ENCODE measurements at regions of chr6 and their contacts with region 1.

Region 1: DNA sequence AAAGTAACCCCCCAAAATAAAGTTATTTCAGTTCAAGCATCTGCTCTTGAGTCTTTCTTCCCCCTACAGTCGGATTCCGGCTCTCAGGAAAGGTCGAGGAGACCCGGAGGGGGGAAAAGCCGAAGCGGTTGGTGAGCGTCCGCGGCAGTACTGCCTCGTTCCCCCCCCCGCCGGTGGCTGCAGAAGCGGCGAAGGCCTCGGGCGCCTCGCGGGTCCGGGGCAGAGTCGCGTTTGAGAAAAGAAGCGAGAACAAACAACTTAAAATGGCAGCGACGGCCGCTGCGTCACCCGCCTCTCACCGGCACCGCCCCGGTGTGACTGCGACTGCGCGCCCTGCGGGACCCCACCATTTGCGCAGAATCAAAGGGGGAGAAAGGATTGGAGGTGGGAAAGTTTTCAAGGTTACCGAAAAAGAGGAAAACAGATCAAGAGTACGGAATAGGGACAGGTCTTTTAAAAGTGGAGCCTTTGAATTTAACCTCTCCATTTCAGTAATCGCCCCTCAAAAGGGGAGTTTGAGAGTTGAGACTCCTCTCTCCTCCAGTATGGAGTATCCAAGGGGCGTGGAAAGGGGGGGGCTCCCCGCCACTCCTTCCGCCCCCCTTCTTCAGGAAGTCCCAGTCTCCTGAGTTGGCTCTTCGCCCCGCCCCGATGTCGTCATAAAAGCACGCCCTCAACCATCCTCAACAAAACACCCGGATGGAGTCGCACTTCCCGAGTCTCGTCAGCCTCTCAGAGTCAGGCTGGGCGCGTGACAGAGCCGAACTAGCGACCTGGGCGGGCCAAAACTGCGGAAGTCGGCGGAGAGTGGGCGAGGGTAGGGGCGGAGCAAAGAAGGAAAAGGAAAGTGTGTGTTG is 1.9 kb upstream of the C6orf62 start:
- DNase-seq: peak; percentile 100
- H3K4me3 ChIP-seq: peak overlapping the region; percentile 81 to 89 (median 86)
- H3K27ac ChIP-seq: peak overlapping the region; percentile 97
- H3K4me1 ChIP-seq: peaks cover 34% of the 10 kb centered on the region
- H3K27me3 ChIP-seq: no peaks in the 10 kb centered on the region
- CTCF ChIP-seq: no peak
- POLR2A ChIP-seq: peak; percentile 98

Region 2: DNA sequence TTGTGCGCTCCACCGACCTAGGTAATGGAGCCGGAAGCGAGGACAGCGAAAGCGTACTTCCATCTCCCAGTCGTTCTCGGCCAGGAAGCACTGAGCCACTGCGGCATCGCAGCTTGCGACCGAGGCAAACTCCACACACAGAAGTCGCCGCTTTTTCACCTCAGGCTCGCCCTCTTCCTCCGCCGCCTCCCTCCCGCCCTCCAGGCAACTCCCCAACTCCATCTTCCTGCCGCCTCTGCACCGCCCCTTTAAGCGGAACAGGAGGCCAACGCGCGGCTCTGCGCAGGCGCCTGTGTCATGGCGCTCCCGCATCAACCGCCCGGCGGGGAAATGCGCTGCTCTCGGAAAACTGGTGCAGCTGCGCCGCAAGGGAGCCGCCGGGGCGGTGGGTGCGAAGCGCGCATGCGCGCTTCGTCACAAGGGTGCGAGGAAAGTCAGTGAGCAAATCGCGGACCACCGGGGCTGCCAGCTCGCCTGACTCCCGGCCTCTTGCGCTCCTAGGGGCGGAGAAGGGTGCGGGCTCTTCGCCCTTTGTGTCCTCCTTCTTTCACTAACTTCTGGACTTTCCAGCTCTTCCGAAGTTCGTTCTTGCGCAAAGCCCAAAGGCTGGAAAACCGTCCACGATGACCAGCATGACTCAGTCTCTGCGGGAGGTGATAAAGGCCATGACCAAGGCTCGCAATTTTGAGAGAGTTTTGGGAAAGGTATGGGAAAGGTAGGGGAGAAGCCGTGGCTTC is 54.0 kb before region 1 on chr6 and contains the starts of genes ACOT13 and TDP2:
- CTCF ChIA-PET with region 1: no interaction called
- POLR2A ChIA-PET with region 1: interaction called, 5 read pairs
- dilution Hi-C with region 1: no loop called
- intact Hi-C with region 1: loop called (anchors 1 kb)
- DNase-seq: peak; percentile 98
- H3K4me3 ChIP-seq: peak within 1 kb of the TSS; percentile 71 to 92 (median 90)
- H3K27ac ChIP-seq: peak within 1 kb of the TSS; percentile 75
- H3K4me1 ChIP-seq: peaks cover 13% of the 10 kb centered on the region
- H3K27me3 ChIP-seq: no peaks in the 10 kb centered on the region
- CTCF ChIP-seq: peak; percentile 34 to 68
- POLR2A ChIP-seq: peak; percentile 83
- total RNA-seq, gene ACOT13: 15.3 and 24.1 TPM in 2 replicates
- total RNA-seq, gene TDP2: 35.3 and 39.2 TPM in 2 replicates

Region 3: GRCh38 chr6:24743265-24743943 is 22.6 kb after region 1 on chr6:
- CTCF ChIA-PET with region 1: interaction called, 14 read pairs
- POLR2A ChIA-PET with region 1: interaction called, 18 read pairs
- dilution Hi-C with region 1: no loop called
- intact Hi-C with region 1: loop called (anchors 1 kb)
- DNase-seq: peak; percentile 95
- H3K4me3 ChIP-seq: peak overlapping the region in 1 of 3 experiments; percentile 9
- H3K27ac ChIP-seq: peak overlapping the region; percentile 90
- H3K4me1 ChIP-seq: peaks cover 16% of the 10 kb centered on the region
- H3K27me3 ChIP-seq: no peaks in the 10 kb centered on the region
- CTCF ChIP-seq: no peak
- POLR2A ChIP-seq: no peak

Region 4: DNA sequence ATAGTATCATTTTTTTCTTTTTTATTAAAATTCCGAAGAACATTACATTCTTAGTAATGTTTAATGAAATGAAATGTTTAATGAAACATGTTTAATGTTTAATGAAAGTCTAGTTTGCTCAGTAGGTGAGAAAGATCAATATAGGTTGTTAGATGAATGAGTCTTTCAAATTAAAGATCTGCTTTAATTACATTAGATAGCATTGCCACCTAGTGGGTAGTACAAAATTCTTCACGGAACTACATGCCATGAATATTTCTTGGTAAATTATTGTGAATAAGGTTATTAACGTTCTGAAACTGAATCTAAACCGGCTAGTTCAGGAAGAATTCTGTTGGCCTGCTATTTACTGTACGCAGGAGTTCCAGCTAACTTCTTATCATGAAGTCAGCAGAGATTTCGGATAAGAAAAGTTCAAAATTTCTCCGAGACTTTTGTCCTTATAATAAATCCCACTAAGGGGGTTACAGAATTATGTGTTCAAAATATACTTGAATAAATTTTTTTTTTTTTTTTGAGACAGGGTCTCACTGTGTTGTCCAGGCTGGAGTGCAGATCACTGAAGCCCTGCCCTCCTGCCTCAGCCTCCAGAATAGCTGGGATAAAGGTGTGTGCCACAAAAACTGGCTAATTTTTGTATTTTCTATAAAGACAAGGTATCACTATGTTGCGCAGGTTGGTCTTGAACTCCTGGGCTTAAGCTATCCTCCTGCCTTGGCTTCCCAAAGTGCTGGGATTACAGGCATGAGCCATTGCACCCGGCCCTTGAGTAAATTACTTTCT is 46.0 kb after region 1 on chr6:
- CTCF ChIA-PET with region 1: interaction called, 22 read pairs
- POLR2A ChIA-PET with region 1: interaction called, 3 read pairs
- dilution Hi-C with region 1: no loop called
- intact Hi-C with region 1: loop called (anchors 1 kb)
- DNase-seq: peak; percentile 44
- H3K4me3 ChIP-seq: no peak overlapping the region
- H3K27ac ChIP-seq: no peak overlapping the region
- H3K4me1 ChIP-seq: no peaks in the 10 kb centered on the region
- H3K27me3 ChIP-seq: no peaks in the 10 kb centered on the region
- CTCF ChIP-seq: peak; percentile 17 to 31
- POLR2A ChIP-seq: no peak

Measured in endothelial cell of umbilical vein (primary cell).